ENCODE measurements at regions of chr3 and their contacts with region 1.

Region 1: GRCh38 chr3:151439652-151440129 is 21.2 kb downstream of the IGSF10 start:
- DNase-seq: peak in 1 of 2 donors; percentile 34
- H3K4me3 ChIP-seq: no peak overlapping the region
- CTCF ChIP-seq: peak in 1 of 3 donors; percentile 17
- POLR2A ChIP-seq: no peak

Region 2: GRCh38 chr3:151918253-151919029 is 478.8 kb after region 1 on chr3:
- intact Hi-C with region 1: loop called (anchors 10 kb)
- DNase-seq: peak in 1 of 2 donors; percentile 49
- H3K4me3 ChIP-seq: no peak overlapping the region
- CTCF ChIP-seq: no peak
- POLR2A ChIP-seq: no peak